ENCODE measurements at regions of chr9 and their contacts with region 1.

Region 1: DNA sequence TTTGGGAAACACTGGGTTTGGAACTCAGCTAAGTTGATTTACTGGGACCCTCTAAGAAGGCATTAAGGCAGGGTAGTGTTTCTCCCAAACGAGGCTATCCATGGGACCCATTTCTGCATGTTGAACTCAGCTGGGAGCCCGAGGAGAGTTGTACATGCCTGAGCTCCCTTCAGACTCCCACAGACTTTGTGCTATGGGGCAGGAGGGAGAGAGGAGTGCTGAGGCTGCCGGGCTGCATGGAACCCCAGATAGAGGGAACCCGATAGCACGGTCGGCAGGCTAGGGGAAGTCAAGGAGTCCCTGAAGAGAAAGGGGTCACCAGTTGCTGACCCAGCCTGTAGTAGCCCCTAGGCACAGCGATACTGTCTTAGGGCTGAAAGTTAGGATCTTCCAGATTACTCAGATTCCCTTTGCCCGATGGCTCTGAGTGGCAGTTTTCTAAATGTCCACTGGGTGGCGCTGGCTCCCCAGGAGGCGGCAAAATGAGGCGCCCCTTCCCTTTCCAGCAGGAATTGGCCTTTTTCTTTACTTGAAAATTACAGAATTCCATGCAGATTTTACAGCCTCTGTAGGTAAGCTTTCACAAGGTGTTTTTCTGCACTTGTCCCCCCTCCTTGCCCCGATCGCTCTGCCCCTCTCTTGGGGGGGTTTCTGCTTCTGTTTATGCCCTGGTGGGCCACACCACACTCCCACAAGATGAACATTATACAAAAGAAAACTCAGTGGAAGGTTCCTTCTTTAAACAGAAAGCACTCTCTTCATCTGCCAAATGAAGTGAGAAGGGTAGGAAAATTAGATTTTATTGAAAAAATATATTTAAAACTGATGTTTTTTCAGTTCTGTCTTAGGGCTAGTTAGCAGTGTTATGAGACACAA is 17.8 kb downstream of the NANS start:
- DNase-seq: no peak
- H3K4me3 ChIP-seq: no peak overlapping the region
- H3K27ac ChIP-seq: peak overlapping the region in 2 of 4 donors; percentile 18 to 28
- H3K4me1 ChIP-seq: peaks cover 0 to 11% (median 7%) of the 10 kb centered on the region in 4 donors
- H3K27me3 ChIP-seq: no peaks in the 10 kb centered on the region
- CTCF ChIP-seq: peak in 3 of 4 experiments; percentile 72 to 92 (median 77)
- EP300 ChIP-seq: no peak
- POLR2A ChIP-seq: no peak

Region 2: DNA sequence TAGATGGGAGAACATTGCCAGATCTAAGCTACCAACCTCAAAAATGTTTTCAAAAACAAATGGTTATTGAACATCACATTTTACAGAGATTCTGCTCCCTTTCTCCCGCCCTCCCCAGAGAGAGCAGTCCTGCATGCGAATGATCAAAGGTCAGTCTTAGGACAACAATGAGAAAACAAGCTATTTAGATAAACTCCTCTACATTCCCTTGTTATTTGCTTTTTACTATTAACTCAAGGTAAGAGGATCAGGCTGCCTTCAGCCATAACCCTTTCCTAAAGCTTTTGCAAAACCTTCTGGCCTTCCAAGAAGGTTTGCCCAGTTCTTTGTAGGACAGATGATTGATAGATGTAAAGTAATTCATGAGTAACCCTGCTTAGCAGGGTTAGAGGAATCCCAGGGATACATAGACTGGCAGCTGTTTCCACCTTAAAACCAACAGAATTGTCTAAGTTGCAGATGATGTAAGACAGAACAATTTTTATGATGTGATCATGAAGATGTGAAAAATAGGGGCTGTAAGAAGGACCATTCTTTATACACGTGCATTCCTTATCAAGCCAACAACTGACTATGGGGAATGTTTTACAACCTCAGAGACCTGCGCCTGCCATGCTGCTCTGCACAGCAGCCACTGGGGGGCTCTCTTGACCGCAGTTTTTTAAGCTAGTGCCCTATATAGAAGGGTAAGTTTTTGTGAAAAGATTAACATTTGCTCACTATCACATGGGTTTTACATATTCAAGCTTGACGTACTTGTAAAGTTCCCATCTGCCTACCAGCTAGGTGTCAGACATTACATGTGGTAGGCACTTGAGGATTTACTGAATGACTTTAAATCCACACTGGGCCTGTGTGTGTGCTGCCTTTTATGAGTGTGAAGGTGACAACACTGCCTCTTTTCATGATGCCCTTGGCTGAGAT is 1217.7 kb before region 1 on chr9:
- intact Hi-C with region 1: no loop called
- DNase-seq: no peak
- H3K4me3 ChIP-seq: no peak overlapping the region
- H3K27ac ChIP-seq: no peak overlapping the region
- H3K4me1 ChIP-seq: peaks cover 0 to 29% (median 20%) of the 10 kb centered on the region in 4 donors
- H3K27me3 ChIP-seq: no peaks in the 10 kb centered on the region
- CTCF ChIP-seq: peak in 3 of 4 experiments; percentile 39 to 85 (median 49)
- EP300 ChIP-seq: no peak
- POLR2A ChIP-seq: no peak

Region 3: DNA sequence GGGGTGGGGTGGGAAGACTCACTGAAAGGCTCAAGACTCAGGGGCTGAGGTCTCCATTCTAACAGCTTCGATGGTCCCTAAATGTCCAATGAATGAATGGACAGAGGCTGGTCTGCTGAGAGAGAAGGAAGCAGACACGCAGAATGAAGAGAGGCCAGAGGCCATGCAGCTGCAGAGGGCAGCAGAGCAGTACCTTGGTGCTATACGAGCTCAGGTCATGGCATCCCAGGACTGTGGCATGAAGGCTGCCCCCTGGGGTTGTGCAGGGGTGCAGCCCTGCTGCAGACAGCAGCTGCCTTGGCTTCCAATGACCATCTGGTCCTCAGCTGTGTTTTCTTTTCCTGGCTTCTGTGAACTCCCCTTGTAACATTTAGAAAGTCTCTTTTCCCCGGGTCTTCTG is 133.3 kb after region 1 on chr9:
- intact Hi-C with region 1: loop called (anchors 10 kb)
- DNase-seq: no peak
- H3K4me3 ChIP-seq: no peak overlapping the region
- H3K27ac ChIP-seq: no peak overlapping the region
- H3K4me1 ChIP-seq: peaks cover 0 to 4% (median 0%) of the 10 kb centered on the region in 4 donors
- H3K27me3 ChIP-seq: no peaks in the 10 kb centered on the region
- CTCF ChIP-seq: no peak
- EP300 ChIP-seq: no peak
- POLR2A ChIP-seq: no peak